Activated CD4-positive, alpha-beta memory T cell treated with anti-CD3 and anti-CD28 coated beads for 36 hours (primary cell): ENCODE measurements at regions of chr7 and their contacts with region 1.

Region 1: GRCh38 chr7:106793015-106793975 is 71.8 kb upstream of the PIK3CG start:
- DNase-seq: no peak
- H3K4me3 Mint-ChIP-seq: no peak overlapping the region
- H3K27ac Mint-ChIP-seq: no peak overlapping the region
- H3K4me1 Mint-ChIP-seq: no peaks in the 10 kb centered on the region
- H3K27me3 Mint-ChIP-seq: peaks cover 4% of the 10 kb centered on the region

Region 2: DNA sequence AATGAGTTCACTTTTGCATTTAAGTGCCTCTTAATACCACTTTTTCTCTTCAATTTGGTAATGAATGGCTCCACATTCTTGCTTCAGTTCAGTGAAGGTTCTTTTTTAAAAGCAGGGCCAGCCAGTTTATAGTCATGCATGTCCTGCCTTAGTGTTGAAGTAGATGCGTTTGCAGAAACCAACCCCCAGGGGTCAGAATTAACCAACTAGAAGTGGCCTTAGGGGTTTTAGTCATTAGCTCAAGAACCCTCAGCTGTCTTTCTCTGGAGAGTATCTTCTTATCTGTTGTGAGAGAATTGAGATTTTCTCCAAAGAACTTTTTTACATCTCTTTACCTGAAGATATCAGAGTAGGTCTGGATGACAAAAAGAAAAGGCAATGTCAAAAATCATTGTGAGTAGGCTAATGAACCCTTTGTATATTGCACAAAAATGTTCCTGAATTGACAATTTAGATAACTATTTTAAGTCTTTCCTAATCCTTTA is 154.0 kb after region 1 on chr7:
- CTCF ChIA-PET with region 1: interaction called, 8 read pairs
- POLR2A ChIA-PET with region 1: no interaction called
- intact Hi-C with region 1: loop called (anchors 10 kb)
- DNase-seq: peak; percentile 30
- H3K4me3 Mint-ChIP-seq: no peak overlapping the region
- H3K27ac Mint-ChIP-seq: no peak overlapping the region
- H3K4me1 Mint-ChIP-seq: no peaks in the 10 kb centered on the region
- H3K27me3 Mint-ChIP-seq: peaks cover 2% of the 10 kb centered on the region

Region 3: DNA sequence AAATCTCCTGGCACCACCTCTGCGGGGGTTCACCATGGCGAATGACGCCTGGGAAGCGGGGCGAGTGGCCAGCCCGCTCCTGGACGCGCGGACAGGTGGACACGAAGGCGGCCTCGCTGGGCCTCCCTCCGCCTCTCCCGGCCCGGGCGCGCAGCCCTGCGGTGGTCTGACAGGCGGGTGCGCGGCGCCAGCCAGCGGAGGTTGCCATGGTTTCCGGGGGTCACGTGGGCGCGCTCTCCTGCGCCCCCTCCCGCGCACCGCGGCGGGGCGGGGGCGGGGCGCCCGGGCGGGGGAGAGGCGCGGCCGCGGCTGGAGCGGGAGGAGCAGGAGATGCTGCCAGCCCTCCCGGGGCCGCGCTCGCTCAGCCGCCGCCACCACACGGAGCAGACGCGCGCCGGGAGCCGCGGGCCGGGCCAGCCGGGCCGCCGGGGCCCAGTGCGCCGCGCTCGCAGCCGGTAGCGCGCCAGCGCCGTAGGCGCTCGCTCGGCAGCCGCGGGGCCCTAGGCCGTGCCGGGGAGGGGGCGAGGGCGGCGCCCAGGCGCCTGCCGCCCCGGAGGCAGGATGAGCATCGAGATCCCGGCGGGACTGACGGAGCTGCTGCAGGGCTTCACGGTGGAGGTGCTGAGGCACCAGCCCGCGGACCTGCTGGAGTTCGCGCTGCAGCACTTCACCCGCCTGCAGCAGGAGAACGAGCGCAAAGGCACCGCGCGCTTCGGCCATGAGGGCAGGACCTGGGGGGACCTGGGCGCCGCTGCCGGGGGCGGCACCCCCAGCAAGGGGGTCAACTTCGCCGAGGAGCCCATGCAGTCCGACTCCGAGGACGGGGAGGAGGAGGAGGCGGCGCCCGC is 251.3 kb after region 1 on chr7 and contains the start of gene PRKAR2B:
- CTCF ChIA-PET with region 1: no interaction called
- POLR2A ChIA-PET with region 1: no interaction called
- intact Hi-C with region 1: loop called (anchors 10 kb)
- DNase-seq: peak; percentile 73
- H3K4me3 Mint-ChIP-seq: peak within 1 kb of the TSS; percentile 72
- H3K27ac Mint-ChIP-seq: no peak within 1 kb of the TSS
- H3K4me1 Mint-ChIP-seq: peaks cover 18% of the 10 kb centered on the region
- H3K27me3 Mint-ChIP-seq: peaks cover 39% of the 10 kb centered on the region
- total RNA-seq, gene PRKAR2B: 1.3 to 1.4 TPM